ENCODE measurements at regions of chr13 and their contacts with region 1.

Region 1: DNA sequence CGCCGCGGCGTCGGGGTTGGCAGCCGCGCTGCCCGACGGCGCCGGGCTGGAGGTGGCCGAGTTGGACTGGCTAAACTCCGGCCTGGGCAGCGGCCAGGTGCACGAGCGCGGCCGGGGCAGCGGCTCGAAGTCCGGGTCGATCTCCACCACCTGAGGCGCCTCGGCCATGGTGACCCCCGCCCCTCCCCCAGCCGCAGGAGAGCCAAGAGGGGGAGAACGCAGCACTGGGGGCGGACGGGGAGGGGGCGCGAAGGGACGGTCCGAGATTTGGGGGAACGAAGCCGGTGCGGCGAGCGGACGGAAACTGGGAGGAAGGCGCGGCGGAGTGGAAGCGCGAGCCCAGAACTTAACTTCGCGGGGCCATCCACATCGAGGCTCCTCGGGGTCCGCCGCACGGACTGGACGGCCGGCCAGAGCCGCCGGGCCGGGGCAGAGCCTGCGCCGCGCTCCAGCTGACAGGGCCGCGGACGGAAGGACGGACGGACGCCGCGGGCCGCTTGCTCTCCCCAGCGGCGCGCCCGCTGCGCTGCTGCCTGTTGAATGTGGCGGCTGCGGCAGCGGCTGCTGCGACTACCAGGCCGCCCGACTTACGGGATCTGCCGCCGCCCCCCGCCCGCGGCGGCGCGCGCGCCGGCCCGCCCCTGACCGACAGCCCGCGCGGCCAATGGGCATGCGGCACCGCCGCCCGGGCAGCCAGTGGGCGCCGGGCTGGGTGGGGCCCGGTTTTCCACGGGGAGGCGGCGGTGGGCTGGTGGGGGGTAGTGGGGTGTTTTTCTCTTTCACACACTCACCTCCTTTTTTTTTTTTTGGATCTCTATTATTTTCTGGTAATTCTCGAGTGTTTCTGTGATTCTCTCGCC is at the start of gene FOXO1:
- DNase-seq: peak; percentile 91
- ATAC-seq: peak; percentile 88 to 90
- total RNA-seq, gene FOXO1: 22.9 to 31.5 TPM

Region 2: DNA sequence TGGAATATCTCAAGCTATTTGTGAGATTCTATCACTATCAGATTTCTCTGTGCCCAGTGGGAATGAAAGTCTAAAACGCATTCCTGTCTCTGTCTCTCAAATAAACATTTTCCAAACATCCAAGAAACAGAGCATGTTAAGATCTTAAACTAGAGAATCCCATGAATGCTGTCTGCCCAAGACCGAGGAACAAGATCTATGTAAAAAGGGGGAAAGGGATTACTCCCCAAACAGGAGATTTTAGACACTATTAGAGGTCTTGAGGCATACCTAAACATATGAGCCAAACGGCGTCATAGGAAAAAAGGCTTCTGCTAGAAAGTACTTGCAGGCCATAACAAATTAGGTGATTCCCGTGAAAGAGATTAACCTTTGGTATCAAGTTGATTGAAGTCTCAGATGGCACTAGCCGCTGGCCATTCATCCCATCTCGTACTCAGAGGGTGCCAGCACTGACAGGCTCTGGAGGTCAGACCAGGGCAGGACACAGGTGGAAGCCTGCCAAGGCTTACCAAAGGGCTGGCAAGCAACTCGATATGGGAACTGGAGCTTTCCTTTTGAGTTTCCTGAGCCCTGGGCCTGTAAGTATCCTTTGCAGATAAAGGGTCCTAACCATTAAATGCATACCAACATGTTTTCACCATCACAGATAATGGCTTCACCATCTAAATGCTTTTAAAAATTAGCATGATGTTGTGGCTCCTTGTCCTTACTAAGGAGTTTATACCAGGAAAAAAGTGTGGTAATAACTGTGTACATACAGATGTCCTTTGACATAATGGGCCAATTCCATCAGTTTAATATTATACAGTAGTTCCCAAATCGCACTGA is 225.1 kb before region 1 on chr13:
- intact Hi-C with region 1: loop called in 1 of 2 experiments (anchors 5 kb)
- DNase-seq: peak; percentile 85
- ATAC-seq: peak; percentile 75 to 80

Region 3: DNA sequence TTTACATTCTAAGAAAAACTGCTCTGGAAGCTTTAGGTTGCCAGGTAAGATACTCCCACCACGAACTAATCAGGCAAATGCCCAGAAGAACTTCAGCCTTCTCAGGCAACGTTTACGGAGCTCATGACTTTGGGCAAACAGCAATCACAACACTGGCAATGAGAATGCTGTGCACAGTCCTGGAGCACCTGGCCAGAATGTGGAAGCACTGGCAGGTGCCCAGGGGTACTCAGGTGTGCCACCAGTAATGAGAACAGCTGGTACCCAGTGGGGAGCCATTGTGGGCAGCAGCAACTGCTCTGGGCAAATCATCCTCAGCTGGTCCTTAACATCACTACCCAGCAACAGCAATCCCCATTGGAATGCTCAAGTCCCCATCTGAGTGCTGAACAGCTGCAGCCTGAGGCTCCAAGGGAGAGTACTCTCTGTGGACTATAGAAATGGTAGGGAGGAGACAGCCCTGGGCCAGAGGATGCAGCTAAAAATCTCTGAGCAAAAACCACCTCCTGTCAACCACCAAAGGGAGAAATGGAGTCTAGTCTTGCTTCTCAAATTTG is 209.8 kb before region 1 on chr13:
- intact Hi-C with region 1: no loop called
- DNase-seq: no peak
- ATAC-seq: no peak

Region 4: DNA sequence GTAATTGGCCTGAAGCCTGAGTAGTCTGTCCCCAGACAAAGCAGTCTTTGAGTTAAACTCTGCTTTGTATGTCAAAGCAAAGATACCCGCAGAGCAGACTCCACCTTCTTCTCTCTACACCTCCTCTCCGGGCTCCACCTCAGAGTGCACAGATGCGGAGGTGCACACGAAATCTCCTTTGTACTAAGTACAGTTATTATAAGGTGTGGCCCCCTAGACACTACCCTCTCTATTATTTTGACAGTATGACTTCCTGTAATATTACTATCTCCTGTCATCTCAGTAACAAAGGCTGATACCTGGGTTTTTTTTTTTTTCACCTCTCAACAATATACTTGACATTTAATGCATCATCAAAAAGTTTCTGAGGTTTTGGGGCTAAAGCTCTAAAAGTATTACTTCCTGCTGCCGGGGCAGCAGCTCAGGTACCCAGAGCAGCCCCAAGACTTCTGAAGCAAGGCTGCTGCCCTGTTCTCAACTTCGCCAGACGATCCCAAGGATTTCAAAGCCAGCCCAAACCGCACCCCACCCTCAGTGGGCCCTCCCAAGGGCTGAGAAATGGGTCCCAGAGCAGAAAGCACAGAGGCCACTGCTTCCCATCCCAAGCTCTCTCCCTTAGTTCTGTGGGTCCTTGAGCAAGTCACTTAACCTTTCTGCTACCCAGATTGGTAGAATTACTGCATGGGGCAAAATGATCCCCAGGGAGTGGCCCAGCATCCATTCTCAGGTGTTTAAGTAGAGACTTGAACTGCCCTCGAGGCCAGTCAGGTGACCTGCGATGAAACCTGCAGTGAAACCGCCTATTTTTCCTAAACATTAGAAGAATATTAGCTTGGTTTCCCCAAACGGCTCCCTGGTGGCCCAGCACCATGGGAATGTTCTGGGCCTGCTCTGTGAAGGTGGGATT is 180.4 kb before region 1 on chr13:
- intact Hi-C with region 1: loop called (anchors 10 kb)
- DNase-seq: no peak
- ATAC-seq: peak; percentile 36 to 41

Region 5: GRCh38 chr13:40564342-40565001 is 101.8 kb before region 1 on chr13:
- intact Hi-C with region 1: loop called in 1 of 2 experiments (anchors 10 kb)
- DNase-seq: no peak
- ATAC-seq: peak; percentile 28 to 31

Region 6: DNA sequence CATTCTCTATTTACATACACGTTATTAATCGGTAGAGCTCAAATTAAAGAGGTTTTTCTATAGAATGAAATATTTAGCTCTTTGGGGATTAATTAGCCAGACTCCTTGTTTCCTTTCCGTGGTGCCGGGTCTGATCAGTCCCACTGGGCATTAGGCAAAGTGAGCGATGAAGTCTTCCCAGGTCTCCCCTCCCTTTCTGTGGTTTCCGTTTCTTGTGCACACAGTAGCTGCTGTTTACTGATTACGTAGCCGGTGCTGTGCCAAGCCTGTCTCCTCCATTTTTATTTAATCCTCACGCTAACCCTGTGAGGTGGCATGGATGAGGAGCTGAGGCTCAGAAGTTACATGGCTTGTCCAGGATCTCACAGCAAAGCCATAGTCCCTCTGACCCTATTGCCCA is 132.1 kb after region 1 on chr13:
- intact Hi-C with region 1: no loop called
- DNase-seq: no peak
- ATAC-seq: no peak